Dendritic cell treated with granulocyte-macrophage colony-stimulating factor and Interleukin-4, amounts not matched to agents 40 ng/mL and 50 ng/mL, for 4 days (primary cell): ENCODE measurements at regions of chr13 and their contacts with region 1.

Region 1: GRCh38 chr13:46492946-46493345 is 60.0 kb upstream of the LRCH1 start:
- H3K4me3 Mint-ChIP-seq: no peak overlapping the region
- H3K27ac Mint-ChIP-seq: no peak overlapping the region
- H3K4me1 Mint-ChIP-seq: peaks cover 6% of the 10 kb centered on the region
- H3K27me3 Mint-ChIP-seq: peaks cover 7% of the 10 kb centered on the region

Region 2: GRCh38 chr13:46721054-46721453 is 228.1 kb after region 1 on chr13:
- intact Hi-C with region 1: loop called (anchors 5 kb)
- H3K4me3 Mint-ChIP-seq: no peak overlapping the region
- H3K27ac Mint-ChIP-seq: no peak overlapping the region
- H3K4me1 Mint-ChIP-seq: no peaks in the 10 kb centered on the region
- H3K27me3 Mint-ChIP-seq: no peaks in the 10 kb centered on the region